CD4-positive, alpha-beta memory T cell (primary cell): ENCODE measurements at regions of chr6 and their contacts with region 1.

Region 1: GRCh38 chr6:107459283-107460082 is at the start of gene PDSS2:
- DNase-seq: peak; percentile 92 to 99 (median 94)
- H3K4me3 ChIP-seq: peak within 1 kb of the TSS; percentile 88 to 92
- H3K4me3 Mint-ChIP-seq: peak within 1 kb of the TSS; percentile 93 to 100 (median 98)
- H3K27ac ChIP-seq: peak within 1 kb of the TSS; percentile 86
- H3K27ac Mint-ChIP-seq: peak within 1 kb of the TSS; percentile 87 to 98 (median 97)
- H3K4me1 ChIP-seq: peaks cover 16% of the 10 kb centered on the region
- H3K4me1 Mint-ChIP-seq: peaks cover 12 to 38% (median 18%) of the 10 kb centered on the region in 4 donors
- H3K27me3 ChIP-seq: no peaks in the 10 kb centered on the region
- H3K27me3 Mint-ChIP-seq: no peaks in the 10 kb centered on the region
- total RNA-seq, gene PDSS2: 10.0 to 11.4 TPM

Region 2: GRCh38 chr6:107033126-107033525 is 426.4 kb before region 1 on chr6:
- CTCF ChIA-PET with region 1: no interaction called
- POLR2A ChIA-PET with region 1: interaction called, 7 read pairs
- intact Hi-C with region 1: loop called (anchors 2 kb)
- DNase-seq: no peak
- H3K4me3 ChIP-seq: no peak overlapping the region
- H3K4me3 Mint-ChIP-seq: no peak overlapping the region
- H3K27ac ChIP-seq: no peak overlapping the region
- H3K27ac Mint-ChIP-seq: peak overlapping the region in 1 of 7 donors; percentile 19
- H3K4me1 ChIP-seq: peaks cover 15% of the 10 kb centered on the region
- H3K4me1 Mint-ChIP-seq: peaks cover 25 to 52% (median 32%) of the 10 kb centered on the region in 4 donors
- H3K27me3 ChIP-seq: no peaks in the 10 kb centered on the region
- H3K27me3 Mint-ChIP-seq: no peaks in the 10 kb centered on the region

Region 3: DNA sequence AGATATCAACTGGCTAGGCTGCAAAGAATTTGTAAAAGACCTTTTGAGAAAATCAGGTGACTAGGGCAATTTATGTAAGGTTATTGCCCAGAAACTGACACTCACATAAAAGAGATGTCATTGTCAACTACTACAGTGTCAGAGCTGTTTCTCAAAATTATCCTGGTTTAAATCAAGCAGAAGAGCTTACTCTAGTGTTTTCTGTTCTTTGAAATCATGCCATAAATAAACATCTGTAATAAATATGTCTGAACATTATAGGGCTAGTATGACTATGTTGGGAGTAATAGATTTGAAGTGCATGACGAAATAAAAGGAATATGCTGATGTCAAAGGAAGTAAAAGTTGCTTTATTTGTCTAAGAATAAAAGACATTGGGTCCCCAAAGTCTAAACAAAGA is 10.9 kb after region 1 on chr6:
- CTCF ChIA-PET with region 1: interaction called, 3 read pairs
- POLR2A ChIA-PET with region 1: interaction called, 12 read pairs
- intact Hi-C with region 1: no loop called
- DNase-seq: no peak
- H3K4me3 ChIP-seq: no peak overlapping the region
- H3K4me3 Mint-ChIP-seq: no peak overlapping the region
- H3K27ac ChIP-seq: no peak overlapping the region
- H3K27ac Mint-ChIP-seq: no peak overlapping the region
- H3K4me1 ChIP-seq: no peaks in the 10 kb centered on the region
- H3K4me1 Mint-ChIP-seq: no peaks in the 10 kb centered on the region
- H3K27me3 ChIP-seq: peaks cover 5% of the 10 kb centered on the region
- H3K27me3 Mint-ChIP-seq: peaks cover 8 to 18% of the 10 kb centered on the region in 2 donors

Region 4: DNA sequence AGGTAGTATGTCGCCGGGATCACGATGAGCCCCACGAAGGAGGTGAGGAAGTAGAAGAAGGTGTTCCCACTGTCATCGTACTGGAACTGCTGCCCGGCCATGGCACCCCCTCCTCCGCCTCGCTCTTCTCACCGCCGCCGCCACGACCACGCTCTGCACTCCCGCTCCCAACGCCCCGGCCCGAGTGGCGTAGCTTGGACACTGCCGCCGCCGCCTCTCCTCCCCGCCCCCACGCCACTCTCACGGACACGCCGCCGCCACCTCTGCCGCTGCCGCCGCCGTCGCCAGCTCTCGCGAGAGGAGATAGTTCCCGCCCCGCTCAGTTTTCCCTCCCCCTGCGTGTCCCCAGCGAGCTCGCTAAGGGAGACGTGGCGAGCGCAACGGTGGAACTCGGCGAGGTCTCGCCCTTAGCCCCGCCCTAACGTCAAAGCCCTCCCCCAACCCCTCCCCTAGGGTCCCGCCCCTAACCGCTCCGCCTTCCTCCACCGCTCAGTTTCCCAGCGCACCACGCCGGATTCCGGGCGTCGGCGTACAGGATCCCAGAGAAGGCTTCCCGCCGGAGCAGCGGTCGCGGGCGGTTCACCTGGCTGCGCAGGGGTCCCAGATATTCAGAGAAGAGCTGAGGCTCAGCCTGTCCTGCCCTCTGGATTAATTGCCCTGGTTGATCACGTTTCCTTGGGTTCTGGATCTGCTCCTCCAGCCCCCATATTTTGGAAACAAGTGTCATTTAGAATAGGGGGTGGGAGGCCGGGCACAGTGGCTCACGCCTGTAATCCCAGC is 498.6 kb after region 1 on chr6 and contains the start of gene SEC63:
- CTCF ChIA-PET with region 1: no interaction called
- POLR2A ChIA-PET with region 1: interaction called, 11 read pairs
- intact Hi-C with region 1: loop called (anchors 2 kb)
- DNase-seq: peak; percentile 95 to 96 (median 96)
- H3K4me3 ChIP-seq: peak within 1 kb of the TSS; percentile 55 to 80
- H3K4me3 Mint-ChIP-seq: peak within 1 kb of the TSS; percentile 92 to 100 (median 98)
- H3K27ac ChIP-seq: peak within 1 kb of the TSS; percentile 86
- H3K27ac Mint-ChIP-seq: peak within 1 kb of the TSS; percentile 92 to 98 (median 97)
- H3K4me1 ChIP-seq: peaks cover 29% of the 10 kb centered on the region
- H3K4me1 Mint-ChIP-seq: peaks cover 18 to 39% (median 29%) of the 10 kb centered on the region in 4 donors
- H3K27me3 ChIP-seq: no peaks in the 10 kb centered on the region
- H3K27me3 Mint-ChIP-seq: no peaks in the 10 kb centered on the region
- total RNA-seq, gene SEC63: 91.7 to 95.5 TPM

Region 5: DNA sequence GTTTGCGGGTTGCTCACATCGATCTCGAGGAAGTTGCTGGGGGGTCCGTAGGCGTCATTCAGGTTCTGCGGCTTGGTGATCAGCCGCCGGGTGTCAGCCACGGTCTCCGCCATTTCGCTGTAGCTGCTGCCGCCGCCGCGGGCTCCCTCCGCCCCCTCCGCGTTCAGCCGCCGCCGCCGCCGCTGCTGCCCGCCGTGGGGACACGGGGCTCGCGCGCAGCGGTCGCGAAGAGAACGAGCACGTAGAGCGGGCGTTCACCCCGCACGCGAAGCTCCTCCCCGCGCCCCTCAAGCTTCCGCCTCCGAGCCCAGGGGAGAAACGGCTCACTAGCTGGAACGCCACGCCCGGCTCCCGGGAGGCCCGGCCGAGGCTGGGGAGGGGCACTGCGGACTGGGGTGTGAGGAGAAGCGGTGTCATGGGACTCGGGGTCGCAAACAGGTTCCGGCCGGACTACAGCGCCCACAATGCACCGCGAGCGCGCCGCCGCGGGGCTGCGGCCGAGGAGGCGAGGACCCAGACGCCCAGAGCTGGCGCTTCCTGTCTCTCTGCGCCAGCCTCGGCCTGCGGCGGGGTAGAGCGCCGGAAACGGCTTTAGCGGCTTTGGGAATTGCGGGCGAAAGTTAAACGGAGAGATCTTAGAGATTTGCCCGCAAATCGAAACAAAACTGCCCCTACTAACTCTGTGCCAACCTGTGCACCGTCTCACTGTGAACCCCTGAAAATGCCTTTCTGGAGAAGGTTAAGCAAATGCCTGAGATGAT is 801.5 kb after region 1 on chr6 and contains the start of gene SNX3:
- CTCF ChIA-PET with region 1: no interaction called
- POLR2A ChIA-PET with region 1: interaction called, 7 read pairs
- intact Hi-C with region 1: loop called (anchors 5 kb)
- DNase-seq: peak; percentile 90 to 94 (median 91)
- H3K4me3 ChIP-seq: peak within 1 kb of the TSS; percentile 93 to 98
- H3K4me3 Mint-ChIP-seq: peak within 1 kb of the TSS; percentile 86 to 97 (median 92)
- H3K27ac ChIP-seq: peak within 1 kb of the TSS; percentile 84
- H3K27ac Mint-ChIP-seq: peak within 1 kb of the TSS; percentile 89 to 97 (median 95)
- H3K4me1 ChIP-seq: peaks cover 43% of the 10 kb centered on the region
- H3K4me1 Mint-ChIP-seq: peaks cover 15 to 38% (median 27%) of the 10 kb centered on the region in 4 donors
- H3K27me3 ChIP-seq: no peaks in the 10 kb centered on the region
- H3K27me3 Mint-ChIP-seq: peaks cover 0 to 2% of the 10 kb centered on the region in 2 donors
- total RNA-seq, gene SNX3: 65.9 to 66.6 TPM